BJ (cell line): ENCODE measurements at regions of chr13 and their contacts with region 1.

Region 1: DNA sequence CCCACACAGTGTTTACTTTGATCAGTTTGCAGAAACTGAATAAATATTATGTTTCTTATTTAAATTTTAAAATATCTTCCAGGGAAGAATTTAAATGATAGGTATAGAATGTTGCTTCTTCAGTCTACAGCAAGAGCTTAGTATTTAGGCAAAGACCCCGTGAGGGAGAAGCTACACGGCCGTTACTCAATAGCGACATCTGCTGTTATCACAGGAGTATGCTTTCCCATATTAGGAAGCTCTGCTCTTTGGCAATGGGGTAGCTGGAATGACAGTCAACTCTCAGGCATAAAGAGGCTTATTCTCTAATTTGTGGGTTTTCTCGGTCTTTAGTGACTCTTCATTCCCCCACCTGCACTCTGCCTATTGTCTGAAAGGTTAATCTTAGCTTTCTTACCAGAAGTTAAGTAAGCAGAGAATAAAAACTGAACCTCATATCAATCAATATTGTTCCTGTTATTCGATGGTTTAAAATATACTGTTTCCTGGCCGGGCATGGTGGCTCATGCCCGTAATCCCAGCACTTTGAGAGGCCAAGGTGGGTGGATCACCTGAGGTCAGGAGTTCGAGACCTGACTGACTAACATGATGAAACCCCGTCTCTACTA is 13.2 kb upstream of the LHFPL6 start:
- DNase-seq: no peak
- H3K4me3 ChIP-seq: no peak overlapping the region
- H3K27me3 ChIP-seq: peaks cover 1% of the 10 kb centered on the region; the same call in 1 of the 2 replicates
- CTCF ChIP-seq: peak; percentile 94

Region 2: DNA sequence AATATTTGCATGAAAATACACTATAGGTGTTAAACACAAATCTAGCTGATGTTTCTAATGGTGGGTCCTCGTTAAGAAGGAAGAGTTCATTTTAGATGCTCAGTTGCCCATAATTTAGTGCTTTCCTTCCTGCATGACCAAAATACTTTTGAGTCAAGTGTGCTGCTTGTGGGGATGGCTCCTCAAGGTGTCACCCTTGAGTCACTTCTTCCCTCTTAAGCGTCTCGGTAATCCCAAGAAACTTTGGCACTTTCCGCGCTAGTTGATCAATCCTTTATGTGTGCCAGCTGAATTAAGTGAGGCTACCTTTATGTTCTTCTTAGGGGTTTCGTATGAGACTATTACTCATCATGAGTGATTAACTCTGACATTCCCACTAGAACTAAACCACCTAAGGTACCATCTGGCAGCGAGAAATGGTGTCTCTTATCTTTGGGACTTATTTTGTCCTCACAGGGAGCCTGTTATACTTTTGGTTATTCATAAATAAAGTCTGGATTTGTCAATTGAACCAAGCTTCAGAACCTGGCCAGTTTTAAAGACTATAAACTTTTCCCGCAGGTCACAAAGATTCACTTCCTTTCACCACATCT is 471.2 kb before region 1 on chr13:
- CTCF ChIA-PET with region 1: interaction called, 91 read pairs
- POLR2A ChIA-PET with region 1: no interaction called
- DNase-seq: peak; percentile 11
- H3K4me3 ChIP-seq: no peak overlapping the region
- H3K27me3 ChIP-seq: no peaks in the 10 kb centered on the region
- CTCF ChIP-seq: peak; percentile 86

Region 3: DNA sequence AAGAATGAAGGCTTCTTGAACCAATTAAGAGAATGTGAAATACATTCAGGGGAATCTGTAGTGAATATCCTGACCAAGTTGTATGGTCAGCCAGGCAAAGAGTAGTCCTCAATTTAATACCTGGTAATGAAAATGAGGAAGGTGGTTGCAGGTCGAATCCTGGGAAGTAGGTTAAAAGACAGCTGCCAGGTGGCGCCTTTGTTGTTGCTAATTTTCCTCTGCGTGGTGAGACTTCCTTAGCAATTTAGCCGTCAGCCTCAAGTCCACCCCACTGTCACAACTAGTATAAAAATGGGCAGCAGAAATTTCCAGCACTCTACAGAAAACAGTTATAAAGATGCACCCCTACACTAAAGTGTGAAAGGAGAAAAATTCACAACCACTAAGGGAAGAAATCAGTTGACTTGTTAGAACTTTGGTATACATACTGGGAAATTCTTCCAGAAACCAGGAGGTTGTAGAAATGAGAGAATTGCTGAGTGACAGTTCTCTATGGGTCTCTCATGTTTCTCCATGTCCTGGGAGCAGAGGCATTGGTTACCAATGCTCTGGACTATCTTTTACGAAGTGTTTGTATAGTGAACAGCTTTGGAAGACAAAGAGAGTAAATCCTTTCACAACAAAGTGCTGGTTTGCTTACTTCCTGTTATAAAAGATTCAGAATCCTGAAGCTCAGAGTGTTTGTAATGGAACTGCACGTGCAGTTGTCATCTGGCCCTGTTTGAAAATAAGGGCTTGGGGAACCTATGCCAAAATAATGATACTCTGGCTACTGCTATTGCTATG is 342.0 kb before region 1 on chr13:
- CTCF ChIA-PET with region 1: interaction called, 16 read pairs
- POLR2A ChIA-PET with region 1: no interaction called
- DNase-seq: no peak
- H3K4me3 ChIP-seq: no peak overlapping the region
- H3K27me3 ChIP-seq: no peaks in the 10 kb centered on the region; the same call in 1 of the 2 replicates
- CTCF ChIP-seq: peak; percentile 16; the same call in 1 of the 2 replicates

Region 4: GRCh38 chr13:39415008-39415802 is 201.0 kb before region 1 on chr13:
- CTCF ChIA-PET with region 1: interaction called, 55 read pairs
- POLR2A ChIA-PET with region 1: no interaction called
- DNase-seq: no peak
- H3K4me3 ChIP-seq: no peak overlapping the region
- H3K27me3 ChIP-seq: no peaks in the 10 kb centered on the region
- CTCF ChIP-seq: peak; percentile 67

Region 5: DNA sequence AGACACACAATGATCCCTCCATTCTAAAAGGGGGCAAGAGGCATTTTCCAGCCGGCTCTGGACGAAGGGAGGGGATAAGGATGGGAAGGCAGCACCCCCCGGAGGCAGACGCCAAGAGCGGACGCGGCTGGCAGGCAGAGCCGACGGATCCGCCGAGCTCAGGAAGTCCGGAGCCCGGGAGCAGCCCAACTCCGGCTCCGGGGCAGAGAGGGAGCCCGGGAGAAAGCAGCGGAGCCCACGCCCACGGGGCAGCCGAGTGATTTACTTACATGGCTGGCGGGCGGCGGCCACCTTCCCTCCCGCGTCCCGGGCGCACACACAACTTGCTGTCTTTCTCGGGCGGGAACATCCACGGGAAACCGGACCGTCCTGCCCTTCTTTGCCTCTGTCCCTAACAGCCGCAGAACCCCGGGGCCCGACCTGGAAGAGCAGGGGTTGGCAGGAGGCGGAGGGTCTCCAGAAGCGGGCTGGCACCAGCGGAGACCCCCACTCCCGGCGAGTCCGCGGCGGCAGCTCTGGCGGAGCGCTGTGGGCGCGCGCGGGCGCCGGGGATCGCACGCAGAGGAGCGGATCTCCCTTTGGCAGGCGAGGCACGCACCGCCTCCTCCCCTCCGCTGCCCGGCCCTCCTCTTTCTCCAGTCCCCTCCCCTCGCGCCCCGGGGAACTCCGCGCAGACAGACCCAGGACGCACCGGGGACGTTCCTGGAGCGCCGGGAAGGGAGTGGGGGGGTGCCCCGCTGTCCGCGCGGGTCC is 13.4 kb before region 1 on chr13 and contains the start of gene LHFPL6:
- CTCF ChIA-PET with region 1: interaction called, 35 read pairs
- POLR2A ChIA-PET with region 1: no interaction called
- DNase-seq: no peak
- H3K4me3 ChIP-seq: peak within 1 kb of the TSS; percentile 90
- H3K27me3 ChIP-seq: no peaks in the 10 kb centered on the region
- CTCF ChIP-seq: peak; percentile 55
- polyA plus RNA-seq, gene LHFPL6: 43.9 and 69.0 TPM in 2 replicates

Region 6: GRCh38 chr13:39631307-39631706 is 15.1 kb after region 1 on chr13:
- CTCF ChIA-PET with region 1: no interaction called
- POLR2A ChIA-PET with region 1: no interaction called
- DNase-seq: no peak
- H3K4me3 ChIP-seq: no peak overlapping the region
- H3K27me3 ChIP-seq: peaks cover 3% of the 10 kb centered on the region; the same call in 1 of the 2 replicates
- CTCF ChIP-seq: no peak